ENCODE measurements at regions of chr2 and their contacts with region 1.

Region 1: GRCh38 chr2:169528271-169528701 is 18.8 kb downstream of the KLHL41 start:
- DNase-seq: peak; percentile 55 to 84 (median 65)
- ATAC-seq: peak; percentile 93
- H3K4me3 ChIP-seq: no peak overlapping the region
- H3K4me3 Mint-ChIP-seq: no peak overlapping the region
- H3K27ac ChIP-seq: no peak overlapping the region
- H3K27ac Mint-ChIP-seq: no peak overlapping the region
- H3K4me1 ChIP-seq: no peaks in the 10 kb centered on the region
- H3K4me1 Mint-ChIP-seq: no peaks in the 10 kb centered on the region
- H3K27me3 ChIP-seq: no peaks in the 10 kb centered on the region
- H3K27me3 Mint-ChIP-seq: no peaks in the 10 kb centered on the region
- CTCF ChIP-seq: peak; percentile 96

Region 2: GRCh38 chr2:169038338-169038757 is 489.9 kb before region 1 on chr2:
- CTCF ChIA-PET with region 1: no interaction called
- POLR2A ChIA-PET with region 1: no interaction called
- intact Hi-C with region 1: no loop called
- DNase-seq: peak in 3 of 14 experiments; percentile 3 to 59 (median 44)
- ATAC-seq: no peak
- H3K4me3 ChIP-seq: no peak overlapping the region
- H3K4me3 Mint-ChIP-seq: no peak overlapping the region
- H3K27ac ChIP-seq: no peak overlapping the region
- H3K27ac Mint-ChIP-seq: no peak overlapping the region
- H3K4me1 ChIP-seq: peaks cover 9% of the 10 kb centered on the region
- H3K4me1 Mint-ChIP-seq: no peaks in the 10 kb centered on the region
- H3K27me3 ChIP-seq: no peaks in the 10 kb centered on the region
- H3K27me3 Mint-ChIP-seq: no peaks in the 10 kb centered on the region
- CTCF ChIP-seq: no peak

Region 3: GRCh38 chr2:169507698-169508097 is 20.6 kb before region 1 on chr2:
- CTCF ChIA-PET with region 1: no interaction called
- POLR2A ChIA-PET with region 1: no interaction called
- intact Hi-C with region 1: no loop called
- DNase-seq: no peak
- ATAC-seq: no peak
- H3K4me3 ChIP-seq: no peak overlapping the region
- H3K4me3 Mint-ChIP-seq: no peak overlapping the region
- H3K27ac ChIP-seq: no peak overlapping the region
- H3K27ac Mint-ChIP-seq: no peak overlapping the region
- H3K4me1 ChIP-seq: no peaks in the 10 kb centered on the region
- H3K4me1 Mint-ChIP-seq: no peaks in the 10 kb centered on the region
- H3K27me3 ChIP-seq: no peaks in the 10 kb centered on the region
- H3K27me3 Mint-ChIP-seq: no peaks in the 10 kb centered on the region
- CTCF ChIP-seq: no peak

Region 4: DNA sequence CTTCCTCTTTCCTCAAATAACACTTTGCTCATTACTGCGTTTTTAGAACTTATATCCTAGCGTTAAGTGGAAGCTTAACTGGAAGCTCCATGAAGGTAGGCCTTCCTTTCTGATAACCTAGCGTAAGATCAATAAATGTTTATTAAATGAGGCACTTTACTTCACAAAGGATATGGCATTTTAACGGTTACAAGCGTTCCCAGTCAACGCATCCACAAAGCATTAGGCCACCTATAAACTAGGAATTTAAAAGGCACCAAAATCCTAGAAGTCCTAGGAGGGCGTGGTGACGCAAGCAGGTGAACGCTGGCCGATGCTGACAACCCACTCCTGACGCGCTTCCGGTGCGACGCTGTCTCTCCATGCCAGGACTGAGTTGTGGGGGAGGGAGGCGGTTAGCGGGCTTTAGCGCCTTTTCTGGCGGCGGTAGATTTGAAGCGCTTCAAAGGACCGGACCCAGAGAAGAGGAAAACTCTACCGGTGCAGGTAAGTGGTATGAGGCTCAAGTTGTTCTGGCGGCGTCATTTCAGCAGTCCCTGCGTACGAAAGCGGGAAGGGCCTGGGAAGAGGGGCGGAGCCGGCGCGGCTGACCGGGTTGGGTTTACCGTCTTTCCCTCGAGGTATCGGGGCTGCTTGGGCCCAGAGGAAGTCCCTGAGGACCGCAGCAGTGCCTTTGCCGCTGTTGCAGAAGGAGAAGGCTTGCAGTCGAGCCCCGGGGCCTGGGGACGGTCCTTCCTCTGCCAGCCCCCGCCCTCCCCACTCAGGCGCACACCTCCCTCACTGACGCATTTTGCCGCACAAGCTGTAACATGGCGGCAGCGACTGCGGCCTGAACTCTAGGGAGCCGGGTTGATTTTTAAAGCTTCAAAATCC is 56.0 kb after region 1 on chr2 and contains the start of gene PPIG:
- CTCF ChIA-PET with region 1: interaction called, 3 read pairs
- POLR2A ChIA-PET with region 1: interaction called, 3 read pairs
- intact Hi-C with region 1: loop called in 1 of 2 experiments (anchors 5 kb)
- DNase-seq: peak; percentile 73 to 96 (median 82)
- ATAC-seq: peak; percentile 92
- H3K4me3 ChIP-seq: peak within 1 kb of the TSS; percentile 81
- H3K4me3 Mint-ChIP-seq: peak within 1 kb of the TSS; percentile 98
- H3K27ac ChIP-seq: peak within 1 kb of the TSS; percentile 97 to 99
- H3K27ac Mint-ChIP-seq: peak within 1 kb of the TSS; percentile 99
- H3K4me1 ChIP-seq: peaks cover 24% of the 10 kb centered on the region
- H3K4me1 Mint-ChIP-seq: peaks cover 39% of the 10 kb centered on the region
- H3K27me3 ChIP-seq: no peaks in the 10 kb centered on the region
- H3K27me3 Mint-ChIP-seq: no peaks in the 10 kb centered on the region
- CTCF ChIP-seq: no peak
- total RNA-seq, gene PPIG: 83.4 to 87.8 TPM

Region 5: DNA sequence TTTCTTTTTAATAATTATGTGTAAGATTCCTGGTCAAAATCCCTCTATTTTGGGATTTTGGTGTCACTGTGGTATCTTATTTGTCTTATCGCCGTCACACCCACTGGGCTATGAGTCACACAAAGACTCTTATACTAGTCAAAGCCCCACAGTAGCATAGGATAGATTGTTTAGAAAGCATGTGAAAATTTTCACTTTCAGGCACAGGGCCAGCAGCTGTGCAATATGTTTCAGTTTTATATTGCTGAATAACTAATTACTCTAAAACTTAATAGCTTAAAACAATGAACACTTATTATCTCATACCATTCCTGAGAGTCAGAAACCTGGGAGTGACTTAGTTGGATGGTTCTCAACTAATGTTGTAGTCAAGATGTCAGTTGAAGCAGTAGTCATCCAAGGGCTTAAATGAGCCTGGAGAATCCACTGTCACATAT is 141.9 kb after region 1 on chr2:
- CTCF ChIA-PET with region 1: no interaction called
- POLR2A ChIA-PET with region 1: no interaction called
- intact Hi-C with region 1: loop called in 1 of 2 experiments (anchors 10 kb)
- DNase-seq: no peak
- ATAC-seq: no peak
- H3K4me3 ChIP-seq: no peak overlapping the region
- H3K4me3 Mint-ChIP-seq: no peak overlapping the region
- H3K27ac ChIP-seq: no peak overlapping the region
- H3K27ac Mint-ChIP-seq: no peak overlapping the region
- H3K4me1 ChIP-seq: no peaks in the 10 kb centered on the region
- H3K4me1 Mint-ChIP-seq: no peaks in the 10 kb centered on the region
- H3K27me3 ChIP-seq: no peaks in the 10 kb centered on the region
- H3K27me3 Mint-ChIP-seq: peaks cover 19% of the 10 kb centered on the region
- CTCF ChIP-seq: no peak

Region 6: GRCh38 chr2:169928463-169928864 is 400.2 kb after region 1 on chr2:
- CTCF ChIA-PET with region 1: no interaction called
- POLR2A ChIA-PET with region 1: no interaction called
- intact Hi-C with region 1: loop called in 1 of 2 experiments (anchors 2 kb)
- DNase-seq: peak in 3 of 14 experiments; percentile 58 to 61 (median 60)
- ATAC-seq: peak; percentile 37
- H3K4me3 ChIP-seq: no peak overlapping the region
- H3K4me3 Mint-ChIP-seq: no peak overlapping the region
- H3K27ac ChIP-seq: no peak overlapping the region
- H3K27ac Mint-ChIP-seq: no peak overlapping the region
- H3K4me1 ChIP-seq: no peaks in the 10 kb centered on the region
- H3K4me1 Mint-ChIP-seq: no peaks in the 10 kb centered on the region
- H3K27me3 ChIP-seq: no peaks in the 10 kb centered on the region
- H3K27me3 Mint-ChIP-seq: no peaks in the 10 kb centered on the region
- CTCF ChIP-seq: peak; percentile 92